Posterior cingulate gyrus (tissue), 11 donors: ENCODE measurements at regions of chr7 and their contacts with region 1.

Region 1: GRCh38 chr7:78499971-78500370 is 701.4 kb downstream of the PHTF2 start:
- DNase-seq: no peak

Region 2: DNA sequence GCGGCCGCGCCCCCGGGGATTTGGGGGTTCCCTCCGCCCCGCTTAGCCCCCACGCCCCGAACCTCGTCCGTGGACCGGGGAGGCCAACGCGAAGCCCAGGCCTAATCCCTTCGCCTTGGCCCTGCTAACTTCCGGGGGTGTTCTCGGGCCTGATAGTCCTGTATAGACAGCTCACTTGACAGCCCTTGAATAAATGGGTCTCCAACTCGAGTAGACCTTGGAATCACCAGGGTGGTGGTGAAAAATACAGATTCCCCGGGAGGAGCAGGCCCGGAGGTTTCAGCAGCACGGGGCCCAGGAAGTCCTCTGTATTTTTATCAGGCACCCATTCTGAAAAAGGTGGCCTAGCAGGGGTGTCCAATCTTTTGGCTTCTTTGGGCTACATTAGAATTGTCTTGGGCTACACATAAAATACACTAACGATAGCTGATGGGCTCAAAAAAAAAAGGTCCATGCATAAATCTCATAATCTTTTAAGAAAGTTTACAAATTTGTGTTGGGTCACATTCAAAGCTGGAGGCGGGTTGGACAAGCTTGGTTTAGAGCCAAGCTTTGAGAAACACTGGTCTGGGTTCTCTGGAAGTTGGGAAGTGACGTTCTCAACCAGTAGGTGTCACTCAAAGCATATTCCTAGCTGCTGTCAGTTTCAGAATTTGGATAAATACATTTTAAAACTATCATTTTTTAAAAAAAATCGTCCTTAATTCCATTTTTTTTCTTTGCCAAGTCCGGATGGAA is 479.7 kb before region 1 on chr7:
- intact Hi-C with region 1: loop called (anchors 10 kb)
- DNase-seq: peak in 4 of 10 donors; percentile 30 to 78 (median 52)

Region 3: GRCh38 chr7:78568690-78569089 is 68.7 kb after region 1 on chr7:
- intact Hi-C with region 1: no loop called
- DNase-seq: no peak